ENCODE measurements at regions of chr1 and their contacts with region 1.

Region 1: GRCh38 chr1:108559215-108560186 is at the start of gene EEIG2:
- DNase-seq: peak; percentile 91
- ATAC-seq: peak; percentile 88
- H3K4me3 Mint-ChIP-seq: peak within 1 kb of the TSS; percentile 95
- H3K27ac Mint-ChIP-seq: peak within 1 kb of the TSS; percentile 84
- H3K4me1 Mint-ChIP-seq: peaks cover 35% of the 10 kb centered on the region
- H3K27me3 Mint-ChIP-seq: no peaks in the 10 kb centered on the region
- CTCF ChIP-seq: peak; percentile 66
- total RNA-seq, gene EEIG2: 10.4 to 12.6 TPM

Region 2: GRCh38 chr1:108199781-108200570 is 359.5 kb before region 1 on chr1 and contains the start of gene SLC25A24:
- CTCF ChIA-PET with region 1: interaction called, 14 read pairs
- POLR2A ChIA-PET with region 1: no interaction called
- intact Hi-C with region 1: no loop called
- DNase-seq: peak; percentile 72
- ATAC-seq: peak; percentile 96
- H3K4me3 Mint-ChIP-seq: peak within 1 kb of the TSS; percentile 85
- H3K27ac Mint-ChIP-seq: peak within 1 kb of the TSS; percentile 75
- H3K4me1 Mint-ChIP-seq: peaks cover 22% of the 10 kb centered on the region
- H3K27me3 Mint-ChIP-seq: no peaks in the 10 kb centered on the region
- CTCF ChIP-seq: no peak
- total RNA-seq, gene SLC25A24: 7.4 to 8.2 TPM

Region 3: DNA sequence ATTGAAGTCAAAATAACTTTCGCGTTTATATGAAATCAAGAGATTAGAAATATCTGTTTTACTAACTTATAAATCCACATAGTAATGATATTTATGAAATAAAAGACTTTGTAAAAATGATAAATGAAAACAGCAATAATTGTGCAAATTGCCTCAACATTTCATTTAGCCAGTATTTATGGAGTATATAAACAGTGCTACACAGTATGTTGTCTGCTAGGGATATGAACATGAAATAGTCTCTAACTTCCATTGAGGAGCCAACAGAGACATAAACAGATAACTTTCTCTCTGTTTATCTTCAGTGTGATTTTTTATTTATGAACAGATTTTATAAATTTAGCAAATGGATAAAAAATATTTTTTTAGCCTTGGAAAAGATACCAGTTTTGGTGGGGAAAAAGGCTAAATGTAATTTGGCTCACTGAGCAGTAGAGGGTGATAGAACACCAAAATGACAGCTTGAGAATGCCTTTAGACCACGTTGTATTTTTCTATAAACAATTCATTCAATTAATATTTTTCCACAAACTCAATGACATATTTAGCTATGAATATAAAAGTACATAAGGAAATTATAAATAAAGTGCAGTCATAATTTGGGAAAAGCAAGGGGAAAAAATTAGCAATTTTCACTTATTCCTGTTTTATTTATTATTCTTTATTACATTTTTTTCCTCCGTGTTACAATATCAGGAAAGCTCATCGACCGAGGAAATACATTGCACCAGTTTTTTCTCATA is 47.1 kb before region 1 on chr1:
- CTCF ChIA-PET with region 1: interaction called, 110 read pairs
- POLR2A ChIA-PET with region 1: interaction called, 5 read pairs
- intact Hi-C with region 1: loop called (anchors 1 kb)
- DNase-seq: no peak
- ATAC-seq: peak; percentile 64
- H3K4me3 Mint-ChIP-seq: no peak overlapping the region
- H3K27ac Mint-ChIP-seq: no peak overlapping the region
- H3K4me1 Mint-ChIP-seq: no peaks in the 10 kb centered on the region
- H3K27me3 Mint-ChIP-seq: peaks cover 8% of the 10 kb centered on the region
- CTCF ChIP-seq: peak; percentile 93

Region 4: DNA sequence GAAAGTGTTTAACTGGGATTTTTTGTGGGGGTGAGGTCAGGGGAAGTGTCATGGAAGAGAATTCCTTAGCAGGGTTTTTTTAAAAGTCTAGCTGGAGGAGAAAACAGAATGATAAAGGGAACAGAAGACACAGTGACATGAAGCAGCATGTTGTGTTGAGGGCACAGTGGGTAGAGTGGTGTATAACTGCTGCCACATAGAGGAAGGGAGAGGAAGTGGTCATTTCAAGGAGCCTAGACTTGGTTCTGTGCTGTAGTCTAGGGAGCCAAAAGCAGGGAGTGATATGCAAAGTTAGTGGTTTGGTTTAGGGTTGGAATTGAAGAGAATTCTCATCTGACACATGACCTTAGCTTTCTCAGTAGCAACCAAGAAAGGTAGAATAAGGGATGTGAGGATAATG is 10.6 kb after region 1 on chr1:
- CTCF ChIA-PET with region 1: interaction called, 46 read pairs
- POLR2A ChIA-PET with region 1: interaction called, 4 read pairs
- intact Hi-C with region 1: no loop called
- DNase-seq: peak; percentile 47
- ATAC-seq: peak; percentile 96
- H3K4me3 Mint-ChIP-seq: no peak overlapping the region
- H3K27ac Mint-ChIP-seq: no peak overlapping the region
- H3K4me1 Mint-ChIP-seq: peaks cover 9% of the 10 kb centered on the region
- H3K27me3 Mint-ChIP-seq: no peaks in the 10 kb centered on the region
- CTCF ChIP-seq: peak; percentile 62

Region 5: DNA sequence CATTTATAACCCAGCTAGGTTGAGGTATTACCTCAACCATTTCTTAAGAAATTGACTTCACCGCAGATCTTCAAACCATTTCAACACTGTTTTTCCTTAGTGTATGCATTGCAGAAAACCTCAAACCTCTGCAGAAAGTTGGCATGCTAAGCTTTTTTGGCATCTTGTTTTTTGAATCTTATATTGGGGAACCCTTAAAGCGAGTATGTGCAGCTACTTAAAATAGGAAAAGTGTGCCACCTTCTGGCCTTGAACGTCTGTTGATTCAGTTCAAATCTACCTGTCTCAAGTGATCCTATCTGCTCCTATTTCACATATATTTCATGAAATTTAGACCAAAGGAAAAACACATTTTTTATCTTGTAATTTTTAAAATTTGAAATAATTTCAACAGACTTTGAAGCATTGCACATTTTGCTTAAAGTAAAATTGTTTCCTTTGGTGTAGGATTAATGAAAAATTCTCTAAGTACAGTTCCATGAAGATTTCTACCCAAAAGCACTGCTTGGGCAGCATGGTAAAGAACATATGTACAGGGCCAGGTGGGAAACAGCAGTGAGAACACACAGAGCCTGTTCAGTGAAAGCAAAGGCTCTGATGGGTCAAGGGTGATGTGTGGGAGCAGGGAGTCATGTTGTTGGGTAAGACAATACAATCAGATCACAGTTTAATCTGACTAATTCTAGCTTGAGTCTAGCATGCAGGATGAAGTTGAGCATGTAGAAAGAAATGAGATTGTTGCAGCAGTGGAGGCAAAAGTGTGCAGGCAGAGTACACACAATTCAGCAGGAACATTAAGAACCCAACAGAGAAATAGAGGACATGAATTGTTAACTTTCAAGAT is 84.2 kb after region 1 on chr1:
- CTCF ChIA-PET with region 1: interaction called, 134 read pairs
- POLR2A ChIA-PET with region 1: interaction called, 19 read pairs
- intact Hi-C with region 1: loop called (anchors 2 kb)
- DNase-seq: peak; percentile 79
- ATAC-seq: peak; percentile 6
- H3K4me3 Mint-ChIP-seq: no peak overlapping the region
- H3K27ac Mint-ChIP-seq: peak overlapping the region; percentile 44
- H3K4me1 Mint-ChIP-seq: peaks cover 72% of the 10 kb centered on the region
- H3K27me3 Mint-ChIP-seq: no peaks in the 10 kb centered on the region
- CTCF ChIP-seq: peak; percentile 79

Region 6: DNA sequence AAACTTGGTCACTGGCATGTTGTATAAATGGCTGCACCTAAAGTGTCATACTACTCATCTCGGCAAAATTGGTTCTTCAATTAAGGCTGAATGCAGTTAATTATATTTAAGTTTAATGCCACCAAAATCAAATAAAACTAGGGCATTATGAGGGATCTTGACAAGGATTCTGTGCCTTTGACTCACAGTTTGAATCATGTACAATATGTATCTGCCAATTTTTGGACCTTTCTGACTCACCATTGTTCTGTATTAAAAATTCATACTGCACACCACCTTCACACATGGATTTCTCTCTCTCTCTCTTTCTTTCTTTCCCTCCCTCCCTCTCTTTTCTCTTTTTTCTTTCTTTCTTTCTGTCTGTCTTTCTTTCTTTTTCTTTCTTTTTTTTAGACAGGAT is 172.9 kb after region 1 on chr1:
- CTCF ChIA-PET with region 1: no interaction called
- POLR2A ChIA-PET with region 1: no interaction called
- intact Hi-C with region 1: no loop called
- DNase-seq: no peak
- ATAC-seq: no peak
- H3K4me3 Mint-ChIP-seq: no peak overlapping the region
- H3K27ac Mint-ChIP-seq: no peak overlapping the region
- H3K4me1 Mint-ChIP-seq: no peaks in the 10 kb centered on the region
- H3K27me3 Mint-ChIP-seq: peaks cover under 1% of the 10 kb centered on the region
- CTCF ChIP-seq: no peak

Measured in activated CD8-positive, alpha-beta T cell treated with anti-CD3 and anti-CD28 coated beads for 36 hours (primary cell).